CD4-positive, alpha-beta memory T cell (primary cell): ENCODE measurements at regions of chr21 and their contacts with region 1.

Region 1: DNA sequence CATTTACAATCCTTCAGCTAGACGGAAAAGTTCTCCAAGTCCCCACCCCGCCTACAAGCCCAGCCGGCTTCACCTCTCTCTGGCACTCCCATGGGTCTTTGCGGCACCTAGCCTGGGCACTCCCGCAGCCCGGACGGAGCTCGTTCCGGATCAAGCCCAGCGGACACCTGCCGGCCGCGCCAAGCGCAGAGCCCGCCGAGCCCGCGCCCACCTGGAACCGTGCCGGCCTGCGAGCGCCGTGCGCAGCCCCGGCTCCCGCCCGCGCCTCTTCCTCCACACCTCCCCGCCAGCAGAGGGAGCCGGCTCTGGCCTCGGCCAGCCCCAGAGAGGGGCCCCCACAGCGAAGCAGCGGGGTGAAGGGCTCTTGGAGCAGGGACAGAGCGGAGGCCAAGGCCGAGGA is 50.0 kb upstream of the KRTAP19-8 start:
- DNase-seq: no peak
- H3K4me3 ChIP-seq: no peak overlapping the region
- H3K4me3 Mint-ChIP-seq: no peak overlapping the region
- H3K27ac ChIP-seq: no peak overlapping the region
- H3K27ac Mint-ChIP-seq: no peak overlapping the region
- H3K4me1 ChIP-seq: no peaks in the 10 kb centered on the region
- H3K4me1 Mint-ChIP-seq: peaks cover 3 to 9% (median 4%) of the 10 kb centered on the region in 4 donors
- H3K27me3 ChIP-seq: no peaks in the 10 kb centered on the region
- H3K27me3 Mint-ChIP-seq: peaks cover 0 to 2% of the 10 kb centered on the region in 2 donors

Region 2: DNA sequence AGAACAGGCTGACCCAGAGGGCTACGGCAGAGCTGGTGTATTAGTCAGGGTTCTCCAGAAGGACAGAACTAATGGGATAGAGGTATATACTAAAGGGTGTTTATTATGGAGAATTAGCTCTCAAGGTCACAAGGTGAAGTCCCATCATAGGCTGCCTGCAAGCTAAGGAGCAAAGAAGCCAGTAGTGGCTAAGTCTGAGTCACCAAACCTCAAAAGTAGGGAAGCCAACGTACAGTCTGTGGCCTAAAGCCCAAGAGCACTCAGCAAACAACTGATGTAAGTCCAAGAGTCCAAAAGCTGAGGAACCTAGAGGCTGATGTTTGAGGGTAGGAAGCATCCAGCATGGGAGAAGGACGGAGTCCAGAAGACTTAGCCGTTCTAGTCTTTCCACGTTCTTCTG is 1610.4 kb before region 1 on chr21:
- CTCF ChIA-PET with region 1: no interaction called
- POLR2A ChIA-PET with region 1: no interaction called
- intact Hi-C with region 1: loop called (anchors 5 kb)
- DNase-seq: no peak
- H3K4me3 ChIP-seq: no peak overlapping the region
- H3K4me3 Mint-ChIP-seq: no peak overlapping the region
- H3K27ac ChIP-seq: no peak overlapping the region
- H3K27ac Mint-ChIP-seq: no peak overlapping the region
- H3K4me1 ChIP-seq: no peaks in the 10 kb centered on the region
- H3K4me1 Mint-ChIP-seq: peaks cover 0 to 15% (median 3%) of the 10 kb centered on the region in 4 donors
- H3K27me3 ChIP-seq: no peaks in the 10 kb centered on the region
- H3K27me3 Mint-ChIP-seq: no peaks in the 10 kb centered on the region

Region 3: GRCh38 chr21:30044445-30045064 is 1043.8 kb before region 1 on chr21:
- CTCF ChIA-PET with region 1: interaction called, 25 read pairs
- POLR2A ChIA-PET with region 1: no interaction called
- intact Hi-C with region 1: no loop called
- DNase-seq: peak in 1 of 5 donors; percentile 0
- H3K4me3 ChIP-seq: no peak overlapping the region
- H3K4me3 Mint-ChIP-seq: no peak overlapping the region
- H3K27ac ChIP-seq: no peak overlapping the region
- H3K27ac Mint-ChIP-seq: no peak overlapping the region
- H3K4me1 ChIP-seq: no peaks in the 10 kb centered on the region
- H3K4me1 Mint-ChIP-seq: no peaks in the 10 kb centered on the region
- H3K27me3 ChIP-seq: no peaks in the 10 kb centered on the region
- H3K27me3 Mint-ChIP-seq: peaks cover 2% of the 10 kb centered on the region in 2 donors

Region 4: GRCh38 chr21:30502041-30502440 is 586.3 kb before region 1 on chr21 and contains the start of gene KRTAP19-5:
- CTCF ChIA-PET with region 1: interaction called, 5 read pairs
- POLR2A ChIA-PET with region 1: no interaction called
- intact Hi-C with region 1: loop called (anchors 2 kb)
- DNase-seq: no peak
- H3K4me3 ChIP-seq: no peak within 1 kb of the TSS
- H3K4me3 Mint-ChIP-seq: no peak within 1 kb of the TSS
- H3K27ac ChIP-seq: no peak within 1 kb of the TSS
- H3K27ac Mint-ChIP-seq: no peak within 1 kb of the TSS
- H3K4me1 ChIP-seq: no peaks in the 10 kb centered on the region
- H3K4me1 Mint-ChIP-seq: no peaks in the 10 kb centered on the region
- H3K27me3 ChIP-seq: no peaks in the 10 kb centered on the region
- H3K27me3 Mint-ChIP-seq: no peaks in the 10 kb centered on the region
- total RNA-seq, gene KRTAP19-5: not detected

Region 5: GRCh38 chr21:30831194-30831765 is 257.0 kb before region 1 on chr21:
- CTCF ChIA-PET with region 1: interaction called, 40 read pairs
- POLR2A ChIA-PET with region 1: no interaction called
- intact Hi-C with region 1: no loop called
- DNase-seq: peak in 4 of 5 donors; percentile 19 to 36 (median 26)
- H3K4me3 ChIP-seq: no peak overlapping the region
- H3K4me3 Mint-ChIP-seq: no peak overlapping the region
- H3K27ac ChIP-seq: no peak overlapping the region
- H3K27ac Mint-ChIP-seq: no peak overlapping the region
- H3K4me1 ChIP-seq: no peaks in the 10 kb centered on the region
- H3K4me1 Mint-ChIP-seq: no peaks in the 10 kb centered on the region
- H3K27me3 ChIP-seq: no peaks in the 10 kb centered on the region
- H3K27me3 Mint-ChIP-seq: peaks cover 10 to 13% of the 10 kb centered on the region in 2 donors